ENCODE measurements at regions of chr1 and their contacts with region 1.

Region 1: DNA sequence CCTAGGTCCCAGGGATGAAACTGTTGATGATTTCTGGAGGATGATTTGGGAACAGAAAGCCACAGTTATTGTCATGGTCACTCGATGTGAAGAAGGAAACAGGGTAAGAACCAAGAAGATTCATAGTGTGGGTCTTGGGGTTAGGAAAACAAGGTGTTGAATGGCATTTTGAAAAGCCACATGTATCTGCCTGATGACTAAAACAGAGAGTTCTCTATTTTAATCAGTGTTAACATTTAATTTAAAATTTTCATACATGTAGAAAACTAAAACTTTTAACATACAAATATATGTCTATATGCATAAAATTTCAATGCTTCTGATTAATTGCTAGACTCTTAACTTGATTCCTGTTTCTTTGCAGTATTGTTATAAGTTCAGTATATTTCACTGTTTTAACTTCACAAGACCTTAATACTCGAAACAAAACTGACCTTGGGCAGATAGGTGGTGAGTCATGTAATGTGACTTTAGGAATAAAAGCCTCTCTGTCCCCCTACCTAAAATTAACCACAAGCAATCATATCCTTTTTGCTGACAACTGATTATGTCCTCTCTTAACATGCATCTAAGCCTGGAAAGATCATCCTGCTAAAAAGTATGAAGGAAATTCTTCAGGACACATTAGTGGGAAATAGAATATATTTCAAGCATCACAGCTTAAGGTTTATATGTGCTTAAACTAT is 95.6 kb downstream of the PTPRC start:
- H3K4me3 Mint-ChIP-seq: no peak overlapping the region
- H3K27ac Mint-ChIP-seq: no peak overlapping the region
- H3K4me1 Mint-ChIP-seq: no peaks in the 10 kb centered on the region
- H3K27me3 Mint-ChIP-seq: no peaks in the 10 kb centered on the region

Region 2: DNA sequence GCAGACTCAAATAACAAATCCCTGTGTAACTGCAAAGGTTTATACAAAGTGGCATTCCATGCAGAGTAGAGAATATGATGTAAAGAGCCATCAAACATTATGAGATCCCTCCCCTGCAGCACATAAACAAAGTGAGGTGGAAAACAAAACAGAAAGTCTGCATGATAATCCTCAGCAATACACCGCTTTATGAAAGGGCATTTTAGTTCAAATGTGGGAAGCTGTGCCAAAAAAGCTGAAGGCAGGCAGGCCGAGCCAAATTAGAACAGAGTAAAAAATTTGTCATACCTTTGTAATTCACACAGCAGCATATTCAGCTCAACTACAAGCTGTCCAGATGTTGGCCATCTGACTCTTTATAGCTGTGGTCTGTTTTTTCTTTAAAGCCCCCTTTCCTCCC is 703.8 kb before region 1 on chr1:
- intact Hi-C with region 1: no loop called
- H3K4me3 Mint-ChIP-seq: no peak overlapping the region
- H3K27ac Mint-ChIP-seq: no peak overlapping the region
- H3K4me1 Mint-ChIP-seq: no peaks in the 10 kb centered on the region
- H3K27me3 Mint-ChIP-seq: no peaks in the 10 kb centered on the region

Region 3: GRCh38 chr1:198633675-198634121 is 100.8 kb before region 1 on chr1:
- intact Hi-C with region 1: no loop called
- H3K4me3 Mint-ChIP-seq: peak overlapping the region; percentile 44
- H3K27ac Mint-ChIP-seq: peak overlapping the region; percentile 93
- H3K4me1 Mint-ChIP-seq: peaks cover 49% of the 10 kb centered on the region
- H3K27me3 Mint-ChIP-seq: no peaks in the 10 kb centered on the region

Region 4: GRCh38 chr1:198723127-198723526 is 11.3 kb before region 1 on chr1:
- intact Hi-C with region 1: loop called (anchors 1 kb)
- H3K4me3 Mint-ChIP-seq: no peak overlapping the region
- H3K27ac Mint-ChIP-seq: no peak overlapping the region
- H3K4me1 Mint-ChIP-seq: peaks cover 17% of the 10 kb centered on the region
- H3K27me3 Mint-ChIP-seq: no peaks in the 10 kb centered on the region

Region 5: DNA sequence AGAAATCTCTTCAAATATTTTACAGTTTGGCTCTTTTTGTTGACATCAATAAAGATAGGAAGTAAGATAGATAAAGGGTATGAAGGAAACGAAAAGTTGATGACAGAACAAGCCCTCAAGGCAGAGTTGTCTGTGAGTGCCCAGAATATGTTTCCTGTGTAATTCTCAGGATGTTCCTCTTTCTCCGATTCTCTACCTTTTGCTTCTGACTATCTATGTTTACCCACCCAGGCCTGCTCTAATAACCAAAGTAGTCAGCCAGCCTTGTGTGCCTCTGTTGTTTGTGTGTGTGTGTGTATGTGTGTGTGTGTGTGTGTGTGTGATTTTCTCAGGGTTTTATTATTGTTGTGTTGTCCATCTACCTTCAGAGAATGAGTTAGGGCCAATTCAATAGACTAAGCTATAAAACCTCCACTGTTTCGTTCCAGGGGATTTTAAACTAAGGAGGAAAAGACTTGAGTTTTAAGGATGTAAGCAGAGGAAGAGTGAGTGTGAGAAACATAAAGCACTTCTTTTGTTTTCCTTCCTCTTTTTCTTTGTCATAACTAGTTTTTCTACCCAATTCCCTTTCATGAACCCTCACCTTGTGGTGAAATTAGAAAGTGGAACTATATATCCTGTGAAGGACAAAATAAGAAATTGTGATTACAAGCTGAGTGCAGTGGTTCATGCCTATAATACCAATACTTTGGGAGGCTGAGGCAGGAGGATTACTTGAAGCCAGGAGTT is 665.7 kb after region 1 on chr1:
- intact Hi-C with region 1: no loop called
- H3K4me3 Mint-ChIP-seq: no peak overlapping the region
- H3K27ac Mint-ChIP-seq: no peak overlapping the region
- H3K4me1 Mint-ChIP-seq: peaks cover 12% of the 10 kb centered on the region
- H3K27me3 Mint-ChIP-seq: no peaks in the 10 kb centered on the region

Region 6: DNA sequence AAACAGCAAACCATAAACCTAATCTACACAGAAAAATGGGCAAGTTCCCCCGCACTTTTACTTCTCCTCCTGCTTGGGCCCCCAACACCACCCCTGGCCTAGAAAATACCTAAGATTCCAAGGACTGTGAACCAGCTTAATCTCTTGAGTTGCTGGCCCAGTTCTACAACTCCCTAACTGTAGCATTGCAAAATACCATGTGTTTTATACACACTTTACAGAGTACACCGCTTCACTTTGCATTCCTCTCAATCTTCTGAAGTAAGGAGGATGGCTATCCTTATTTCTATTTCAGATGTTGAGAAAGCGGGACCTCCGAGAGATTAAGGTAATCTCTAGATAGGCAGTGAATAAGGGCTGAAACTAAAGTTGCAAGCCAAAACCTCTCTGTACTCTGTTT is 884.8 kb after region 1 on chr1:
- intact Hi-C with region 1: loop called (anchors 5 kb)
- H3K4me3 Mint-ChIP-seq: no peak overlapping the region
- H3K27ac Mint-ChIP-seq: no peak overlapping the region
- H3K4me1 Mint-ChIP-seq: no peaks in the 10 kb centered on the region
- H3K27me3 Mint-ChIP-seq: no peaks in the 10 kb centered on the region

Measured in dendritic cell treated with granulocyte-macrophage colony-stimulating factor and Interleukin-4, amounts not matched to agents 40 ng/mL and 50 ng/mL, for 4 days (primary cell).